ENCODE measurements at regions of chr18 and their contacts with region 1.

Region 1: GRCh38 chr18:4068552-4069158 is 386.5 kb downstream of the DLGAP1 start:
- DNase-seq: peak; percentile 49 to 69
- H3K4me3 ChIP-seq: no peak overlapping the region
- H3K4me3 Mint-ChIP-seq: no peak overlapping the region
- H3K27ac Mint-ChIP-seq: no peak overlapping the region
- H3K4me1 ChIP-seq: no peaks in the 10 kb centered on the region
- H3K4me1 Mint-ChIP-seq: no peaks in the 10 kb centered on the region
- H3K27me3 ChIP-seq: no peaks in the 10 kb centered on the region
- H3K27me3 Mint-ChIP-seq: peaks cover 7% of the 10 kb centered on the region
- CTCF ChIP-seq: peak; percentile 73

Region 2: DNA sequence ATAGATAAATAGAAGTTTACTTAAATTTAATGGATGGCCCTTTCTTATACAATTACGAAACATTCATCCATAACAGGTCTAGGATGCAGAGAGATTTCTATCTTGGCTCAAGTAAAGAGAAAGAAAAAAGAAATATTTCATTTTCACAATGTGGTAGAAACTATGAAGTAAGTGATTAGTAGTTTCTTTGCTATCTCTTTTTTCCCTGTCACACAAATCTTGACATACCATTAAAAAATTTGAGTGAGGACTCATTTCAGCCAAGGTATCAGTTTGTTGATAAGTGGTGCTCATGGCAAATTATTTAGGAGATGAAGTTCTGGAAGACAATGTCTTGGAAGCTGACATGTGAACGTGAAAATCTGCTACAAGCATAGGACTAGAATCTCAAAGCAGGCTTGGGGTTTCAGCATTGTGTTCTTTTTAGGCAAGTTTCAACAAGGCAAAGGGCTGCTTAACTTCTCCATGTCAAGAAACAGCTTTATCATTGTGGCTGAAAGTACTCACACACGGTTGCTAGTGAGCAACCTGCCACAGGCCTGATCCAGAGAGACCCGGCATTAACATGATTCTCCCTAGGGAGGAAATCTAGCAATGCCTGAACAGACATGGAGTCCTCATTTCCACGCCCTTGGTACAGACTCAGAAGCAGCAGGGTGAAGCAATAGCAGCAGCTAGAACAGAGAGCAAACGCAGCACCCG is 28.1 kb before region 1 on chr18:
- CTCF ChIA-PET with region 1: no interaction called
- POLR2A ChIA-PET with region 1: no interaction called
- intact Hi-C with region 1: loop called (anchors 2 kb)
- DNase-seq: no peak
- H3K4me3 ChIP-seq: no peak overlapping the region
- H3K4me3 Mint-ChIP-seq: no peak overlapping the region
- H3K27ac Mint-ChIP-seq: peak overlapping the region; percentile 77
- H3K4me1 ChIP-seq: peaks cover 27% of the 10 kb centered on the region
- H3K4me1 Mint-ChIP-seq: peaks cover 18% of the 10 kb centered on the region
- H3K27me3 ChIP-seq: no peaks in the 10 kb centered on the region
- H3K27me3 Mint-ChIP-seq: no peaks in the 10 kb centered on the region
- CTCF ChIP-seq: no peak

Measured in Caco-2 (cell line).